Endothelial cell of umbilical vein (primary cell): ENCODE measurements at regions of chr2 and their contacts with region 1.

Region 1: GRCh38 chr2:177239932-177240630 is 24.4 kb downstream of the NFE2L2 start:
- DNase-seq: peak; percentile 75
- H3K4me3 ChIP-seq: peak overlapping the region in 1 of 3 experiments; percentile 0
- H3K27ac ChIP-seq: peak overlapping the region; percentile 99
- H3K4me1 ChIP-seq: peaks cover 56% of the 10 kb centered on the region
- H3K27me3 ChIP-seq: no peaks in the 10 kb centered on the region
- CTCF ChIP-seq: no peak
- POLR2A ChIP-seq: no peak

Region 2: DNA sequence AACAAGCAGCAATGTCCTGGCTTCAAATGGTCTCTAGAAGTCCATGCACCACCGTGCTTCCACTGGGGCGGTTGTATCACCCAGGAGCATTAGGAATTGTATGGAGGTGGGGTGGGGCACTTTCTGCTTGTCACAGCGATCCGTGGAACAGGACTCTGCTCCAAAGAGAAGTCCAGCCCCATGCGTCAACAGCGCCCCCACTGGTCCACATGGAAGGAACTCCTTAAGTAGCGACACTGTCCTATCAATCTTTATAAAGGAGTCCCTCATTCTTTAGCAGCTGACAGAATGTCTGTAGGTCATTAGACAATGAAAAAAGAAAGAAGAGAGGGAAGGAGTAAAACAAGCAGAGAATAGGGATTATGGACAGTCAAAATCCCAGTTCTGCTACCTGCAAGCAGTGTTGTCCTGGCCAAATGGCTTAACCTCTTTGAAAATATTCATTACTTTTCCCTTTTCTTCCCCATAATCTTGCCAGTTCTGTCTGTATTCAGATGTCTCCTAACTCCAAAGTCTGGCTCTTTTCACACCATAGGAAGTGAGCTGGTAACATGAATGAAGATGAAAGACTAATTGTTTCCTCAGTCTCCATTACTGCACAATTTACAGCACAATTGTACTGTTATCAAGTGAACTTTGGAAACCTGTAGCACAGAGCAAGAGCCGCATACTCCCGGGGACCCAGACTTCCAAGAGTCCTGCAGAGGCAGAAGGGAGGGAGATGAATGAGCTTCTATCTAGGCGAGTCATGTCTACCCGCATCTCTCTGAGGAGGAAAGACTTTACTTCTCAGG is 14.5 kb after region 1 on chr2:
- CTCF ChIA-PET with region 1: interaction called, 9 read pairs
- POLR2A ChIA-PET with region 1: interaction called, 3 read pairs
- dilution Hi-C with region 1: no loop called
- intact Hi-C with region 1: loop called (anchors 1 kb)
- DNase-seq: peak; percentile 64
- H3K4me3 ChIP-seq: no peak overlapping the region
- H3K27ac ChIP-seq: peak overlapping the region; percentile 19
- H3K4me1 ChIP-seq: peaks cover 55% of the 10 kb centered on the region
- H3K27me3 ChIP-seq: no peaks in the 10 kb centered on the region
- CTCF ChIP-seq: peak; percentile 65 to 68
- POLR2A ChIP-seq: no peak